ENCODE measurements at regions of chr6 and their contacts with region 1.

Region 1: DNA sequence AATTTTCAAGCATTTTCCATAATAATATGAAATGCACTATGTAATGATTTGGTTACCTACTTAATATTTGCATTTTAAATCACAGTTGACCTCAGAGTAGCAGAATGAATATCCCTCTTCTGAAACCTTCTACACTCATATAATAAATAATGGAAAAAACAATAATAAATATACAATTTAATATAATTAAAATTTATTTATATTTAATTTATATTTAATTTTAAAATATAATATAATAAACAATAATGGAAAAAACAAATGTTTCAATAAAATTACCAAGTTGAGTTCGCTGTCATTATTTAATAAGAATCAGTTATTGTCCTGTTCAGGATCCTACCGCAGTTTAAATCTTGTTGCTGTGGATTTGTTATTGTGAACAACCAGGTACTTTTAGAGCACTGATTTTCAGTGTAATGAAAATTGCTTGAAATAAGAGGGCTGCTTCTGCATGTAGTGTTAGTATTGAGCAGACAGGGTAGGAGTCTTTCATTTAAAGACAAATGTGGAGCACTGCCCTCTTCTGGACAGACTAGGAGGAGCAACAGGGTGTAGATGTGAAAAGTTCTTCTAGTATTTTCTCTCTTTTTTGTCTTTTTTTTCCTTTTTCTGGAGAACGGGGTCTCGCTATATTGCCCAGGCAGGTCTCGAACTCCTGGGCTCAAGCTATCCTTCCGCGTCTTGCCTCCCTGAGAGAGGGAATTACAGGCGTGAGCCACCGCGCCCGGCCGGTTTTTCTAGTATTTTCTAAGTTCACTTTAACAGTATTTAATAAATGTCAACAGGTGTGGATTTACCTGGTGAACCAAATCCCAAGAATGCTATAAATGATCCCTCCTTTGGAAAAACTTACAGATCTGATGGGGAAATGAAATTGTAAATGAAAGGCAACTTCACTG is 13.6 kb downstream of the TRAPPC3L start:
- DNase-seq: peak; percentile 28 to 65
- ATAC-seq: peak; percentile 76 to 89; a peak in 4 of 6 replicates
- H3K4me3 ChIP-seq: no peak overlapping the region
- H3K27ac ChIP-seq: no peak overlapping the region
- H3K4me1 ChIP-seq: peaks cover 12% of the 10 kb centered on the region
- CTCF ChIP-seq: peak; percentile 67
- EP300 ChIP-seq: no peak
- POLR2A ChIP-seq: no peak
- RAD21 ChIP-seq: peak; percentile 57 to 58

Region 2: GRCh38 chr6:116511404-116512110 is 20.4 kb before region 1 on chr6 and contains the start of gene CALHM5:
- CTCF ChIA-PET with region 1: interaction called, 12 read pairs
- POLR2A ChIA-PET with region 1: no interaction called
- DNase-seq: peak; percentile 10 to 76
- ATAC-seq: peak; percentile 95 to 98
- H3K4me3 ChIP-seq: no peak within 1 kb of the TSS
- H3K27ac ChIP-seq: 0 out of 6 replicates have a peak within 1 kb of the TSS, but pooled peaks of 1 of the 2 experiments have one; percentile 51
- H3K4me1 ChIP-seq: no peaks in the 10 kb centered on the region
- CTCF ChIP-seq: peak; percentile 50
- EP300 ChIP-seq: no peak
- POLR2A ChIP-seq: no peak
- RAD21 ChIP-seq: peak; percentile 44 to 50; a peak in 4 of 5 replicates
- polyA plus RNA-seq, gene CALHM5: 0.09 and 0.11 TPM in 2 replicates

Region 3: DNA sequence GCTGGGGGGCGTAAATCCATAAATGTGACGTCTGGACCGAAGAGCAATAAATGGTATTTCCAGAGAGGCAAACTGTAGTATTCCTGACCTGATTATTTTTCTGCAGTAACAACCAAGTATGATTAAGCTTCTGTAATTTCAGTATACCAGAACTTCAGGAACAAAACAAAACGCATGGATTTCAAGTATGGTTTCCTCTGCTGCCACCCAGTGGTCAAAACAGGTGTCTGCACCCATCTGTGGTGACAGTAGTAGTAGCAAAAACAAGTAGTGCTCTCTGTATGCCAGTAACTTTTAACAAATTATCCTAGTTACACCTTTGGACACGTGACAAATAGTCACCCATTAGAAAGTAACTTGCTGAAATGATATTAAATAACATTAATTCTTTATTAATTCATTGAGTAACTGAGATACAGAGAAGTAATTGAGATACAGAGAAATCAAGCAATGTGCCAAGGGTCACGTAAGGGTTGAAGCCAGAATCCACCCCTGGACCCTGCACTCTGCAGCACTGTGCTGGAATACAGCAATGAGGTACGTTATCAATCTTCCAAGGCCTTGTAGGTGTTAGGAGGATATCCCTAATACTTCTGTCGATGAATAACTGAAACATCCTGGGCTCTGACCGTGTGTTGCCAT is 29.6 kb after region 1 on chr6:
- CTCF ChIA-PET with region 1: interaction called, 15 read pairs
- POLR2A ChIA-PET with region 1: no interaction called
- DNase-seq: peak; percentile 9 to 55
- ATAC-seq: peak; percentile 55 to 76; a peak in 4 of 6 replicates
- H3K4me3 ChIP-seq: no peak overlapping the region
- H3K27ac ChIP-seq: no peak overlapping the region
- H3K4me1 ChIP-seq: peaks cover 26% of the 10 kb centered on the region
- CTCF ChIP-seq: peak; percentile 84
- EP300 ChIP-seq: no peak
- POLR2A ChIP-seq: no peak
- RAD21 ChIP-seq: peak; percentile 81

Measured in A549 (cell line).